ENCODE measurements at regions of chr6 and their contacts with region 1.

Region 1: GRCh38 chr6:17167327-17167979 is 65.6 kb downstream of the STMND1 start:
- DNase-seq: peak in 4 of 5 donors; percentile 54 to 76 (median 66)
- ATAC-seq: peak; percentile 84 to 97 (median 96)
- H3K4me3 ChIP-seq: no peak overlapping the region
- H3K27ac ChIP-seq: peak overlapping the region in 5 of 12 donors; percentile 6 to 59 (median 26)
- H3K4me1 ChIP-seq: peaks cover 0 to 10% (median 0%) of the 10 kb centered on the region in 12 donors
- H3K27me3 ChIP-seq: no peaks in the 10 kb centered on the region
- CTCF ChIP-seq: peak in 11 of 12 donors; percentile 32 to 63 (median 52)
- POLR2A ChIP-seq: no peak

Region 2: DNA sequence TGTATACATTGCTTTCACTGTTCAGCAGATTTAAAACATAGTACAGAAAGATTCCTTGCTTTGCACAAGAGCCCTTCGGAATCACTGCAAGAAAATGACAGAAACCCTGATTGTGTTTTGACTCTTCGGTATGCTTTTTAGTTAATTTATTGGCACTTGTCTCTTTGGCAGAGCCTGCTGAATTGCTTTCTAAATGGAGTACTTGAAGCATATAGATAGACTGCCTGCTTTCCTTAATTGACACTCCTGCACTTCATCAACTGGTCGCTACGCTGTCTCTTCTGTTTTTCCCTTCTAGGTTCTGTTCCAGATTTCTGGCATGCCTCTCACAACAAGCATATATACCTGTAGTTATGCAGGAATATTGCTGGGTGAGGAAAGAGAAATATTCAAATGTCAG is 91.3 kb after region 1 on chr6:
- intact Hi-C with region 1: loop called in 1 of 10 experiments (anchors 10 kb)
- DNase-seq: no peak
- ATAC-seq: peak in 3 of 4 donors; percentile 55 to 66 (median 56)
- H3K4me3 ChIP-seq: no peak overlapping the region
- H3K27ac ChIP-seq: peak overlapping the region in 9 of 12 donors; percentile 1 to 66 (median 34)
- H3K4me1 ChIP-seq: peaks cover 0 to 12% (median 2%) of the 10 kb centered on the region in 12 donors
- H3K27me3 ChIP-seq: no peaks in the 10 kb centered on the region
- CTCF ChIP-seq: peak in 2 of 12 donors; percentile 4 to 11
- POLR2A ChIP-seq: no peak

Measured in heart left ventricle (tissue), 16 donors.